HCT116 (cell line): ENCODE measurements at regions of chr15 and their contacts with region 1.

Region 1: GRCh38 chr15:74322181-74323076 is 45.0 kb downstream of the CYP11A1 start:
- DNase-seq: peak; percentile 29
- ATAC-seq: peak; percentile 93
- H3K4me3 ChIP-seq: no peak overlapping the region
- H3K27ac ChIP-seq: no peak overlapping the region
- H3K4me1 ChIP-seq: no peaks in the 10 kb centered on the region; a peak in 2 of 4 replicates
- H3K27me3 ChIP-seq: no peaks in the 10 kb centered on the region
- CTCF ChIP-seq: peak; percentile 90 to 93 (median 93)
- POLR2A ChIP-seq: no peak
- RAD21 ChIP-seq: peak; percentile 94

Region 2: DNA sequence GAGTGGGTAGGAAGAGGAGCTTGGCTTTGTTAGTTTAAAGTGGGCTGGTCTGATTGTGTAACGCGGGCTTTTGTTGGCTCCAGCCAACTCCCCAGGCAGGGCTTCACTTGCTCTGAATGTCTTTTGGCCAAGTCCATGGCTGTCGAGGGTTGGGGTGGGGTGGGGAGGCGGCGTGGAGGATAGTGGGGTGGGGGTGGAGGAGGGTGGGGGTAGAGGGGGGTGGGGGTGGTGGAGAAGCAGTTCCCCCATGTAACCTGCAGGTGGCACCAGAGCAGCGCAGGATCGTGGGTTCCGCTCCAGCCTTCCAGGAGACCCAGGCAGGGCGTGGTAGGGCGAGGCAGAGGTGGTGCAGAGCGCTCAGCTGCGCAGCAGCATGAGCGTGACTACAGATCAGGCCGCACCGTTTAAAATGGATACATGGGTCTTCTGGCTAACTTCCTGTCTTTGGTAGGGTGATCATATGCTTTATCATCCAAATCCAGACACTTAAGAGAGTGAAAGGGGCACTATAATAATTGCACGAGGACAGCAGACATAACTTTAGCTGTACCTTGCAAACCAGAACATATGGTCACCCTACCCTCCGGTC is 268.4 kb before region 1 on chr15:
- CTCF ChIA-PET with region 1: interaction called, 90 read pairs
- POLR2A ChIA-PET with region 1: no interaction called
- RAD21 ChIA-PET with region 1: interaction called, 6 read pairs
- intact Hi-C with region 1: no loop called
- DNase-seq: peak; percentile 52
- ATAC-seq: peak; percentile 99
- H3K4me3 ChIP-seq: peak overlapping the region in 1 of 2 experiments; percentile 29; a peak in 1 of 4 replicates
- H3K27ac ChIP-seq: no peak overlapping the region
- H3K4me1 ChIP-seq: peaks cover 4 to 16% of the 10 kb centered on the region in 2 experiments; a peak in 3 of 4 replicates
- H3K27me3 ChIP-seq: no peaks in the 10 kb centered on the region
- CTCF ChIP-seq: peak; percentile 33 to 62 (median 53); a peak in 5 of 6 replicates
- POLR2A ChIP-seq: no peak
- RAD21 ChIP-seq: peak; percentile 68

Region 3: GRCh38 chr15:74127260-74127953 is 195.0 kb before region 1 on chr15:
- CTCF ChIA-PET with region 1: interaction called, 5 read pairs
- POLR2A ChIA-PET with region 1: no interaction called
- RAD21 ChIA-PET with region 1: no interaction called
- intact Hi-C with region 1: loop called (anchors 1 kb)
- DNase-seq: peak; percentile 69
- ATAC-seq: peak; percentile 100
- H3K4me3 ChIP-seq: peak overlapping the region; percentile 32 to 33
- H3K27ac ChIP-seq: no peak overlapping the region
- H3K4me1 ChIP-seq: peaks cover 0 to 9% of the 10 kb centered on the region in 2 experiments; a peak in 2 of 4 replicates
- H3K27me3 ChIP-seq: no peaks in the 10 kb centered on the region
- CTCF ChIP-seq: peak; percentile 83 to 99 (median 98)
- POLR2A ChIP-seq: no peak
- RAD21 ChIP-seq: peak; percentile 100

Region 4: GRCh38 chr15:74172701-74173379 is 149.6 kb before region 1 on chr15:
- CTCF ChIA-PET with region 1: no interaction called
- POLR2A ChIA-PET with region 1: no interaction called
- RAD21 ChIA-PET with region 1: no interaction called
- intact Hi-C with region 1: no loop called
- DNase-seq: no peak
- ATAC-seq: no peak
- H3K4me3 ChIP-seq: no peak overlapping the region
- H3K27ac ChIP-seq: no peak overlapping the region
- H3K4me1 ChIP-seq: peaks cover 0 to 2% of the 10 kb centered on the region in 2 experiments; a peak in 2 of 4 replicates
- H3K27me3 ChIP-seq: peaks cover 4% of the 10 kb centered on the region; the same call in 1 of the 2 replicates
- CTCF ChIP-seq: no peak
- POLR2A ChIP-seq: no peak
- RAD21 ChIP-seq: no peak